Activated B cell treated with CpG ODN at 0.5 μM for 24 hours (primary cell): ENCODE measurements at regions of chr4 and their contacts with region 1.

Region 1: DNA sequence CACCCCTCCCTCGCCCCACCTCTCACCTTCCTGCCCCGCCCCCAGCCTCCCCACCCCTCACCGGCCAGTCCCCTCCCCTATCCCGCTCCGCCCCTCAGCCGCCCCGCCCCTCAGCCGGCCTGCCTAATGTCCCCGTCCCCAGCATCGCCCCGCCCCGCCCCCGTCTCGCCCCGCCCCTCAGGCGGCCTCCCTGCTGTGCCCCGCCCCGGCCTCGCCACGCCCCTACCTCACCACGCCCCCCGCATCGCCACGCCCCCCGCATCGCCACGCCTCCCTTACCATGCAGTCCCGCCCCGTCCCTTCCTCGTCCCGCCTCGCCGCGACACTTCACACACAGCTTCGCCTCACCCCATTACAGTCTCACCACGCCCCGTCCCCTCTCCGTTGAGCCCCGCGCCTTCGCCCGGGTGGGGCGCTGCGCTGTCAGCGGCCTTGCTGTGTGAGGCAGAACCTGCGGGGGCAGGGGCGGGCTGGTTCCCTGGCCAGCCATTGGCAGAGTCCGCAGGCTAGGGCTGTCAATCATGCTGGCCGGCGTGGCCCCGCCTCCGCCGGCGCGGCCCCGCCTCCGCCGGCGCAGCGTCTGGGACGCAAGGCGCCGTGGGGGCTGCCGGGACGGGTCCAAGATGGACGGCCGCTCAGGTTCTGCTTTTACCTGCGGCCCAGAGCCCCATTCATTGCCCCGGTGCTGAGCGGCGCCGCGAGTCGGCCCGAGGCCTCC is at the starts of genes HTT and HTT-AS:
- DNase-seq: peak; percentile 93
- ATAC-seq: peak; percentile 77
- H3K4me3 Mint-ChIP-seq: peak within 1 kb of the TSS; percentile 92
- H3K27ac Mint-ChIP-seq: peak within 1 kb of the TSS; percentile 95
- H3K4me1 Mint-ChIP-seq: peaks cover 39% of the 10 kb centered on the region
- H3K27me3 Mint-ChIP-seq: no peaks in the 10 kb centered on the region
- CTCF ChIP-seq: no peak
- total RNA-seq, gene HTT: 239 and 242 TPM in 2 replicates
- total RNA-seq, gene HTT-AS: not detected in 2 replicates

Region 2: DNA sequence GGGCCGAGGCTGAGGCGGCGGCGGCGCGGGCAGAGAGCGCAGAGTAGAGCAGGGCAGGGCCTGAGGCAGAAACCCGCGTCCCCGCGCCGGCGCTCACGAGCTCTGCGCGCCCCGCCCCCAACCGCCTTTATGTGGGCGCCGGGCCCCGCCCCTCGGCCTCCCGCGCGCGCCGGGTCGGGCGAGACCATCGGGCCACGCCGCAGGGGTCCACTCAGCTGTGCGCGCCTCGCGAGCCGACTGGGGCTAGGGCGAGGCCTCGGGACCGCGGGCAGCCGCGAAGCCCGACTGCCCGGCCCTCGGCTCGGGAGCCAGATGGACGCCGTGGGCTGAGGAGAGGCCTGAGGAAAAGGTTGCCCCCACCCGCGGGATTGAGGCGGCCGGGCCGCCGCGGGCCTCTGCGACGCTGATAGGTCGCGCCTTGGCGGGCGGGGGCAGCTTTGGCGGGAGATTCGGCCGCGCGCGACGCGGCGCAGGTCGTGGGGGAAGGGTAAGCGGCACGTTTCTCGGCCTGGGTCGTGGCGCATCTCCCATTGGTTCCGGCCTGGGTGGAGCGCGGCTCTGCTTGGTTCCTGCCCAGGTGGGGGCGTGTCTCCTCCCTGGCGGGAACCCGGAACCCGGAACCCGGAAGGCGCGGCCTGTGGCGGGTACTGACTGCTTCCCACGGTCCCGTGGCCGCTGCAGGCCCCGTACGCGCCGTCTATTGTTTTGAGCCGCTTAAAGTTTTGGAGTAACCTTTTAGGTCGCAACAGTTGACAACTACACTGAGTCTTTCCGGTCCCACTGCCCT is 1361.8 kb before region 1 on chr4 and contains the start of gene SLBP:
- CTCF ChIA-PET with region 1: no interaction called
- POLR2A ChIA-PET with region 1: no interaction called
- intact Hi-C with region 1: loop called (anchors 10 kb)
- DNase-seq: peak; percentile 97
- ATAC-seq: peak; percentile 87
- H3K4me3 Mint-ChIP-seq: peak within 1 kb of the TSS; percentile 94
- H3K27ac Mint-ChIP-seq: peak within 1 kb of the TSS; percentile 93
- H3K4me1 Mint-ChIP-seq: peaks cover 73% of the 10 kb centered on the region
- H3K27me3 Mint-ChIP-seq: no peaks in the 10 kb centered on the region
- CTCF ChIP-seq: no peak
- total RNA-seq, gene SLBP: 34.0 and 37.8 TPM in 2 replicates

Region 3: DNA sequence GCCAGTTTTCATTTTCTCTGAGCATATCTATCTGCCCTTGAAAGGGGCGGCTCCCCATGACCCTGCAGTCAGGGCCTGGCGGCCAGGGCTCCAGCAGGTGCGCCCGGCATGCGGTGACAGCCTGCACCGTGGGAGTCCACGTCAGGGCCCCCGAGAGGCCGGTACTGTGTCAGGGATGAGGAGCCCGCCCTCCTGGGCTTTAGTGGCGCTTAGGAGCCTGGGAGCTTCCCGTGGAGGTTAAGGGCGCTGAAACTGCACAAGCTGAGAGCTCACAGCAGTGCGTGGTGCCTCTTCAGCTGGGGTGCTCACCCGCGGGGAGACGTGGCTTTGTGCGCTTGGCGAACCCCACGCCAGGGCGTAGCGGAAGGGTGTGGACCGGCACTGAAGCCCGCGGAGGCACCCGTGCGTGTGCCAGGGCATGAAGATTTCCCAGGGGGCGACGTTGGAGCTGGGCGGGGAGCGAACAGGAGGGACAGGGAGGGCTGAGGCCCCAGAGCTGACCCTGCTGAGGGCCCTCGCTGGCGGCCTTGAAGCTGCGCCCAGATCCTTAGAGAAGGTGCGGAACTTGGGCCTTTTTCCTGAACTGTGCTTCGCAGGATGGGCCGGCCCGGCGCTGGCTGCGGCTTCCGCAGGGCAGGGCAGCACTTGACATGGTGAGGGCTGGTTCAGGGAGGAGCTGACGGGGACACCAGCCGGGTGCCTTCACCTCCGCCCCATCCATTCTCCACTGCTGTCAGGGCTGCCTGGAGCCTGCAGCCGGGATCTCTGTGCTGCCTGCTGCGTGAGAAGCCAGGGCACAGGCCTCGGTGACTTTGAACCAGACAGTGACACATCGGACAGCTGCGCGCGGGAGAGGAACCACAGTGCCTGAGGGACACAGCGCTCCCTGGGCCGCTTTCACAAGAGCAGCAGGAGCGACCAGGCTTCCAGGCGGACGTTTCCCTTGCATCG is 32.8 kb before region 1 on chr4:
- CTCF ChIA-PET with region 1: interaction called, 3 read pairs
- POLR2A ChIA-PET with region 1: interaction called, 29 read pairs
- intact Hi-C with region 1: no loop called
- DNase-seq: peak; percentile 57
- ATAC-seq: peak; percentile 53
- H3K4me3 Mint-ChIP-seq: peak overlapping the region; percentile 87
- H3K27ac Mint-ChIP-seq: peak overlapping the region; percentile 93
- H3K4me1 Mint-ChIP-seq: peaks cover 79% of the 10 kb centered on the region
- H3K27me3 Mint-ChIP-seq: no peaks in the 10 kb centered on the region
- CTCF ChIP-seq: no peak

Region 4: DNA sequence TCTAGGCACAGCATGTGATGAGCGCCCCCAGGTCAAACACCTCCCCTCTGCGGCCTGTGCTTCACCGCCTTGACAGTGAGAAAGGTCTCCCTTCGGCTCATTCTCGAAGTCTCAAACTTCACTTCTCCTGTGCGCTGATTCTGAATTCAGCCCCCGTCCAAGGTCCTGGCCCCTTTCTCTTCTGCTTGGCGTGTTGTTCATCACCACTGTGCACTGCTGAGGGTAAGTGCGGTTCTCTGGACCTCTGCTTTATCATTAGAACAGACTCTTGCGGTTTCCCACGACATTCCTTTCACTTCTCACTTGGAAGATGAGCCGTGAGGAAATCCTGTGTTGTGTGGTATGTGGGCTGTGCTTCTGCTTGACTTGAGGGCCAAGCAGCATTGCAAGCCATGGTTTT is 11.8 kb before region 1 on chr4:
- CTCF ChIA-PET with region 1: no interaction called
- POLR2A ChIA-PET with region 1: interaction called, 18 read pairs
- intact Hi-C with region 1: loop called (anchors 1 kb)
- DNase-seq: no peak
- ATAC-seq: no peak
- H3K4me3 Mint-ChIP-seq: no peak overlapping the region
- H3K27ac Mint-ChIP-seq: no peak overlapping the region
- H3K4me1 Mint-ChIP-seq: peaks cover 20% of the 10 kb centered on the region
- H3K27me3 Mint-ChIP-seq: no peaks in the 10 kb centered on the region
- CTCF ChIP-seq: no peak

Region 5: DNA sequence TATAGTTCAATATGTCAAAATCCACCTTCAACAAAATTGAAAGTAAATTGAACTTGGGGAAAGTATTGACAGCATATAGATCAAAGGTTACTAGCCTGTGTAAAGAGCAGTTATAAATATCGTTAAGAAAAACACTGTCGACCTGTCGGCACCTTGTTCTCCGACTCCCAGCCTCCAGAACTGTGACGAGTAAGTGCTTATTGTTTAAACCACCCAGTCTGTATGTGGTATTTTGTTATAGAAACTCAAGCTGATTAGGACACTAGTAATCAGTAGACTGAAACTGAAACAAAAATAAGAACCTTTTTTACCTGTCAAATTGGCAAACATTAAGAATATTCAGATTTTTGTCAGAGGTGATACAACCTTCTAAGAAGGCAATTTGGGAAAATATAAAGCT is 17.2 kb after region 1 on chr4:
- CTCF ChIA-PET with region 1: no interaction called
- POLR2A ChIA-PET with region 1: interaction called, 3 read pairs
- intact Hi-C with region 1: loop called (anchors 2 kb)
- DNase-seq: no peak
- ATAC-seq: no peak
- H3K4me3 Mint-ChIP-seq: no peak overlapping the region
- H3K27ac Mint-ChIP-seq: no peak overlapping the region
- H3K4me1 Mint-ChIP-seq: peaks cover 11% of the 10 kb centered on the region
- H3K27me3 Mint-ChIP-seq: no peaks in the 10 kb centered on the region
- CTCF ChIP-seq: no peak

Region 6: DNA sequence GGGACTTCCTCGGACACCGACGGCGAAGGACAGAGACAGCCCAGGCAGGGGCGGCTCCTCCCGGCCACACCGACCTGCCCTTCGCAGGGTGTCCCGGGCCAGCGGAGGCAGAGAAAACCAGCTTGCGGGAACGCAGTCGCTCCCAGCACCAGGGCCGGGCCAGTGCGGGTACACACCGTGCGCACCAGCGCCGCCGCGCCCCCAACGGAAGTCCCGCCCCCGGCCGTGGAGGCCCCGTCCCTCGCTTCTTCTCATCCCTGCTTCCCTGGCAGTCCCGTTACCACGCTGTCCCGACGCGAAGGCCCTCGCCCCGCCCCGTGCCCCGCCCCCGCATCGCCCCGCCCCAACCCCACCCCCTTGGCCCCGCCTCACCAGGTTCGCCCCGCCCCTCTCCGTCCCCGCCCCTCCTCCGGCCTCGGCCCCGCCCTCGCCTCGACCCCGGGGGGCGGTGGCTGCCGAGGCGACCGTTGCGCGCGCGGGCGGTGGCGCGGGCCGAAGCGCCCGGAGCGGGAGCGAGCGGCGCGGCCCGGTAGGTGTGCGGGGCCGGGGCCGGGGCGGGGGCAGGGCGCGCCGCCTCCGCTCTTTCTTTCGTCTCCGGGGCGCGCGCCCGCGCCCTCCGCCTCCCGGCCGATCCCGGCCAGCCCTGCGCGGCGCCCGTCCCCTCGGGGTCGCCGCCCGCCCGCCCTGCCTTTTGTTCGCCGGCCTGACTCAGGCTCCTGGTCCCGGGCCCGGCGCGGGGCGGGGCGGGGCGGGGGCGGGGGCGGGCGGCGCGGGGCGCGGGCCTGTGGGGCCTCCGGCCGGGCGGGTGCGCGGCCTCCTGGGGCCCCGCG is 218.5 kb after region 1 on chr4 and contains the start of gene RGS12:
- CTCF ChIA-PET with region 1: no interaction called
- POLR2A ChIA-PET with region 1: no interaction called
- intact Hi-C with region 1: loop called (anchors 1 kb)
- DNase-seq: peak; percentile 81
- ATAC-seq: peak; percentile 83
- H3K4me3 Mint-ChIP-seq: peak within 1 kb of the TSS; percentile 86
- H3K27ac Mint-ChIP-seq: peak within 1 kb of the TSS; percentile 51
- H3K4me1 Mint-ChIP-seq: peaks cover 14% of the 10 kb centered on the region
- H3K27me3 Mint-ChIP-seq: peaks cover 15% of the 10 kb centered on the region
- CTCF ChIP-seq: no peak
- total RNA-seq, gene RGS12: 8.5 and 10.6 TPM in 2 replicates

Region 7: DNA sequence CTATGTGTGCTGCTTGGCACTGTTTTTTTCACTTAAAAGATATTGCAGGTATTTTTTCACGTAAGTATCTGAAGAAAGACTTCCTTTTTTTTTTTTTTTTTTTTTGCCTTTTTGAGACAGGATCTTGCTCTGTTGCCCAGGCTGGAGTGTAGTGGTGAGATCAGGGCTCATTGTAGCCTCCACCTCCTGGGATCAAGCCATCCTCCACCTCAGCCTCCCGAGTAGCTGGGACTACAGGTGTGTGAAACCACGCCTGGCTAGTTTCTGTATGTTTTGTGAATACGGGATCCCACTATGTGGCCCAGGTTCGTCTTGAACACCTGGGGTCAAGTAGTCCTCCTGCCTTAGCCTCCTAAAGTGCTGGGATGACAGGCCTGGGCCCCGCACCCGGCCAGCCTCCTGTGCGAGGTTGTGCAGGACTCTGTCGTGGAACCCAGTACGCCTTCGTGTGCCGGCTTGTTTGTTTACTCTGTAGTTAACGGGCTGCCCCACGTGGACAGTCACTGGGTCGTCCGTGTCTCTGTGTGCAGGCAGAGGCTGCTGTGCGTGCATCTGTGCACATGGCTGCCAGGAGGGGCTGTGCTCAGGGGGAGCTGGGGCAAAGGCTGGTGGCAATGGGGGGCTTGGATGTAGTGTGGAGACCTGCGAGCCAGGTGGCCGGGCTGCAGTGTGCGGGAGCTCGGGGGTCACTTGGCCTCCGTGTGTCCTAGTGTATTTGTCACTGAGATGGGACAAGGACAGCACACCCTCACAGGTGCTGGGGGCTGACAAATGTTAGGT is 871.5 kb after region 1 on chr4:
- CTCF ChIA-PET with region 1: no interaction called
- POLR2A ChIA-PET with region 1: no interaction called
- intact Hi-C with region 1: loop called (anchors 10 kb)
- DNase-seq: no peak
- ATAC-seq: no peak
- H3K4me3 Mint-ChIP-seq: no peak overlapping the region
- H3K27ac Mint-ChIP-seq: no peak overlapping the region
- H3K4me1 Mint-ChIP-seq: peaks cover 10% of the 10 kb centered on the region
- H3K27me3 Mint-ChIP-seq: peaks cover 2% of the 10 kb centered on the region
- CTCF ChIP-seq: no peak